ENCODE measurements at regions of chr7 and their contacts with region 1.

Region 1: GRCh38 chr7:94289071-94289470 is 105.6 kb upstream of the COL1A2 start:
- DNase-seq: peak; percentile 81
- H3K4me3 Mint-ChIP-seq: no peak overlapping the region
- H3K27ac Mint-ChIP-seq: no peak overlapping the region
- H3K4me1 Mint-ChIP-seq: no peaks in the 10 kb centered on the region
- H3K27me3 Mint-ChIP-seq: no peaks in the 10 kb centered on the region
- CTCF ChIP-seq: peak; percentile 74

Region 2: DNA sequence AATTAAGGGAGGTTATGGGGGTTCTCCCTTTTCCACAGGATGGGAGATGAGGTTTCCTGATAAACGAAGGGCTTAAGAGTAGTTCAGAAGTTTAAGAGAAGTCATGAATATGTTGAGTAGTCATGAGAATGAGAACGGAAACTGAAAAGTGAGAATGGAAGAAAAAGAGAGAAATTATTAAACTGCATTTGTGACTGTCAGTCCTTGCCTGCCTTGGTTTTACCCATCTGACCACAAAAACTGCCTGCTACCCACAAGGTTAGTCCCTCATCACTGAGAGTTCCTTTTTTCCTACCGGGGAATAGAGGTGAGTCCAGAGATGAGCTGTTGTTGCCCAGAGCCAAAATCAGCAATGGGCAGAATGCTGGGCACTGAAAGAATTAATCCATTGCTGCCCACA is 110.8 kb before region 1 on chr7:
- CTCF ChIA-PET with region 1: no interaction called
- POLR2A ChIA-PET with region 1: no interaction called
- intact Hi-C with region 1: no loop called
- DNase-seq: no peak
- H3K4me3 Mint-ChIP-seq: no peak overlapping the region
- H3K27ac Mint-ChIP-seq: no peak overlapping the region
- H3K4me1 Mint-ChIP-seq: peaks cover 3% of the 10 kb centered on the region
- H3K27me3 Mint-ChIP-seq: no peaks in the 10 kb centered on the region
- CTCF ChIP-seq: no peak

Region 3: GRCh38 chr7:94301024-94301586 is 12.0 kb after region 1 on chr7:
- CTCF ChIA-PET with region 1: interaction called, 44 read pairs
- POLR2A ChIA-PET with region 1: interaction called, 3 read pairs
- intact Hi-C with region 1: no loop called
- DNase-seq: peak; percentile 92
- H3K4me3 Mint-ChIP-seq: peak overlapping the region; percentile 27
- H3K27ac Mint-ChIP-seq: peak overlapping the region; percentile 86
- H3K4me1 Mint-ChIP-seq: peaks cover 39% of the 10 kb centered on the region
- H3K27me3 Mint-ChIP-seq: no peaks in the 10 kb centered on the region
- CTCF ChIP-seq: no peak

Region 4: GRCh38 chr7:94368371-94368791 is 79.3 kb after region 1 on chr7:
- CTCF ChIA-PET with region 1: interaction called, 15 read pairs
- POLR2A ChIA-PET with region 1: no interaction called
- intact Hi-C with region 1: no loop called
- DNase-seq: peak; percentile 70
- H3K4me3 Mint-ChIP-seq: peak overlapping the region; percentile 34
- H3K27ac Mint-ChIP-seq: peak overlapping the region; percentile 82
- H3K4me1 Mint-ChIP-seq: peaks cover 17% of the 10 kb centered on the region
- H3K27me3 Mint-ChIP-seq: no peaks in the 10 kb centered on the region
- CTCF ChIP-seq: no peak

Region 5: GRCh38 chr7:94386416-94386815 is 97.3 kb after region 1 on chr7:
- CTCF ChIA-PET with region 1: interaction called, 14 read pairs
- POLR2A ChIA-PET with region 1: no interaction called
- intact Hi-C with region 1: no loop called
- DNase-seq: no peak
- H3K4me3 Mint-ChIP-seq: no peak overlapping the region
- H3K27ac Mint-ChIP-seq: no peak overlapping the region
- H3K4me1 Mint-ChIP-seq: peaks cover 8% of the 10 kb centered on the region
- H3K27me3 Mint-ChIP-seq: no peaks in the 10 kb centered on the region
- CTCF ChIP-seq: no peak

Region 6: DNA sequence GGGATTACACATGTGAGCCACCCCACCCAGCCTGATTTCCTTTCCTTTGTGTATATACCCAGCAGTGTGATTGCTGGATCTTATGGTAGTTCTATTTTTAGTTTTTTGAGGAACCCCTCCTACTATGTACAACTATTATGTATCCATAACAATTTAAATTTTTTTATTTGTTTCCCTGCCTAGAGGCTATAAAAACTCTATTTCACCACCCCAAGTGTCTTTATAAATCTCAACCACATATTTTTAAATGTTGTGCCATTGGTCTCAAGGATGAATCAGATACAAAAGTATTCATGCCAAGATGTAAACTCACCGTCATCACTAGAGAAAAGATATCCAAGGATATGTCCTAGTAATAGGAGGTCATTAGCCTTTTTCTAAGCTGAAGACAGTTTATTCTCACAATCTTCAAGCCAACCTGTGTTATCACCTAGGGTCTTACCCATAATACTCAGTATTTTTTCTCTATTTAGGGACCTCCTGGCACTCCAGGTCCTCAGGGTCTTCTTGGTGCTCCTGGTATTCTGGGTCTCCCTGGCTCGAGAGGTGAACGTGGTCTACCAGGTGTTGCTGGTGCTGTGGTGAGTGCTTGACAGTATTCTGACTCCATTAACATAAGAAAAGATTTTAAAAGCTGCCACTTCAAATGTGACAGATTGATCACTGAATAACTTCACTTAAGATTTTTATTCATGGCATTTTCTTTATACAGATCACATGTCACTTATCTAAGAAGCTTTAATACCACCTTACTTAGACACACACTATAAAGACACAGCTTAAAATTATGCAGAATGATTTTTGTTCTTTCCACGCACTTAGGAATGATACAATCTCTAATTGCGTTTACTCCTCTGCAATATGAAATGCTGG is 135.0 kb after region 1 on chr7:
- CTCF ChIA-PET with region 1: interaction called, 19 read pairs
- POLR2A ChIA-PET with region 1: no interaction called
- intact Hi-C with region 1: no loop called
- DNase-seq: peak; percentile 52
- H3K4me3 Mint-ChIP-seq: no peak overlapping the region
- H3K27ac Mint-ChIP-seq: peak overlapping the region; percentile 99
- H3K4me1 Mint-ChIP-seq: peaks cover 8% of the 10 kb centered on the region
- H3K27me3 Mint-ChIP-seq: no peaks in the 10 kb centered on the region
- CTCF ChIP-seq: no peak

Region 7: GRCh38 chr7:94442639-94443038 is 153.6 kb after region 1 on chr7:
- CTCF ChIA-PET with region 1: interaction called, 113 read pairs
- POLR2A ChIA-PET with region 1: no interaction called
- intact Hi-C with region 1: no loop called
- DNase-seq: no peak
- H3K4me3 Mint-ChIP-seq: no peak overlapping the region
- H3K27ac Mint-ChIP-seq: no peak overlapping the region
- H3K4me1 Mint-ChIP-seq: no peaks in the 10 kb centered on the region
- H3K27me3 Mint-ChIP-seq: peaks cover 15% of the 10 kb centered on the region
- CTCF ChIP-seq: no peak